HEK293 (cell line): ENCODE measurements at regions of chr17 and their contacts with region 1.

Region 1: DNA sequence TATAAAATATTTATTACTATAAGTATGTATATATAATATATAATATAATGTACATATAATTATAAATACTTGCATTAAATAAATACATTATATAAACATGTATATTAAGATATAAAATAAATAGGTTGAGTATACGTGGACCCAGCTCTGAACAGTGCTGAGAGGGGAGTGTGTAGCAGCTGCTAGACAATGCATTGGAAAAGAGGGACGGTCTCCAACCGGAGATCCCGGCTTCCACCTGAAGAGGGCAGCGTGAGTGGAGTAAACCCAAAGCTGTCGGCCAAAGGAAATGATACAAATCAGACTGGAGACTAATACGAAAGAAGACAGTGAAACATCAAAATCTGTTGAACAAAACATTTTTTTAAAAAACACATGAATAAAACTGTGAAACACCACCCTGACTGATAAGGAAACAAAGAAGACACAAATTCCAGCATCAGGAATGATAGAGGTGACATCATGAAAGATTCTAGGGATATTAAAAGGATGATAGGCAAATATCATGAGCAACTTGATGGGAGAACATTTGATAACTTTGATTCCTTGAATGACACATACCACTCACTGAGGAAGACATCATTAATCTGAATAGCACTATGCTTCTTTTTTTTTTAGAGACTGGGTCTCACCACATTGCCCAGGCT is 125.4 kb upstream of the CHMP6 start:
- H3K4me3 ChIP-seq: no peak overlapping the region
- H3K27ac ChIP-seq: no peak overlapping the region
- H3K4me1 ChIP-seq: no peaks in the 10 kb centered on the region
- CTCF ChIP-seq: peak; percentile 56

Region 2: GRCh38 chr17:80826955-80827645 is 39.2 kb before region 1 on chr17:
- CTCF ChIA-PET with region 1: no interaction called
- POLR2A ChIA-PET with region 1: no interaction called
- H3K4me3 ChIP-seq: no peak overlapping the region
- H3K27ac ChIP-seq: no peak overlapping the region
- H3K4me1 ChIP-seq: peaks cover 10% of the 10 kb centered on the region
- CTCF ChIP-seq: no peak

Region 3: DNA sequence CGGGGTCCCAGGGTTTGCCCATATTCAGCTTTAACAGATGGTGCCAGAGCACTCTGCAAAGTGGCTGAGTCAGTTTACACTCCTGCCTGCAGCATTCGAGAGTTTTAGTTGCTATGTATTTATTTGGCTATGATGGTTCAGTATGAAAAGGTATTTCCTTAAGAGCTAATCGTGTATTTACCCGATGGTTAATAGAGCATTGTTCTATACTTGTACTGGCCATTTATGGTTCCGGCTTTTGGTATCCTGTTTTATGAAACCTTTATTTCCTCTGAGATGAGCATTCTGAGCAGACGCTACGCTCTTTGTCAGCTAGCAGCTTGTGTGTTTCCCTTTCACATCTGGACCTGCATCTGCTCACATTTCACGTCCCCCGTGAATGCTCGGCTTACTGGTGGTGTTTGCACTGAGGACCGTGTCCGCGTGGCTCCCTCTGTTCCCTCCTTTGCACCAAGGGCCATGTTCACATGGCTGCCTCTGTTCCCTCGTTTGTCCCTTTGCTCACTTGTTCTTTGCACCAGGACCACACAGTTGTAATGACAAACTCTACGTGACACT is 23.7 kb before region 1 on chr17:
- CTCF ChIA-PET with region 1: interaction called, 5 read pairs
- POLR2A ChIA-PET with region 1: interaction called, 10 read pairs
- H3K4me3 ChIP-seq: no peak overlapping the region
- H3K27ac ChIP-seq: no peak overlapping the region
- H3K4me1 ChIP-seq: no peaks in the 10 kb centered on the region
- CTCF ChIP-seq: no peak

Region 4: DNA sequence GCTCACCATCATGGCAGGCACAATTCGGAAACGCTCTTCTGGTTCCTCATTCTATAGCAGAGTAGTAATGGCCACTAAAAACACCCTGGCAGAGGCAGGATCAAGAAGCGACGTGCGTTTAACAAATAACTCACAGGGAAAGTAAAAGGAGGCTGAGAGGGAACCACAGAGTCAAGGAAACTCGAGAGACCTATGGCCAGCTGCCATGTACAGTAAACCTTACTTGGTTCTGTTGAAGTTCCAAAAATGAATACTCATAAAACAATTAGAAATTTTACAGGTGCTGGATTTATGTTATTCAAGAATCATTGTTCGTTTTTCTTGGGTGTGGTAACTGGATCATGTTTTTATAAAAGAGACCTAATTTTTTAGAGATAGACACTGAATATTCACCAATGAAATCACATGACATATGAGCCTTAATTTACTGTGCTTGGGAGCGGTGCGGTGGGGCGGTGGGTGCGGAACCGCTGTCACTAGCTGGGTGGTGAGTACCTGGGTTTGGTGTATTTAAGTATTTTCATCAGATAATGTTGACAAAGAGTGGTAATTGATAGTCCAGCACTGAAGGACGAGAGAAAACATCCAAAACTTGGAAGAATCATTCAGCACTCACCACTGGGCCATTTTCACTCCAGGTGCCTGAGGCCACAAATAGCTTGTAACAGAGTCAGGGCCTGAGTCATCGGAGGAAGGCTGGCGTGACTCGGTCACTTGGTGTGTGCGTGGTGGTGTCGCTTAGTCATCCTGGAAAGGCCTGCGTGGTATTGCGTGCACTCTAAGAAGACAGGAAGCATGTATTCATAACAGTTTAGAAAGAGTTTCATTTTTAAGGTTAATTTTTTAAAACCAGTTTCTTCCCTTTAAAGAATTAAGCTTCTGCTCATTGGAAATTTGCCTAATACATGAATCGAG is 10.1 kb before region 1 on chr17:
- CTCF ChIA-PET with region 1: interaction called, 11 read pairs
- POLR2A ChIA-PET with region 1: no interaction called
- H3K4me3 ChIP-seq: no peak overlapping the region
- H3K27ac ChIP-seq: 0 out of 2 replicates have a peak overlapping the region, but pooled peaks have one; percentile 10
- H3K4me1 ChIP-seq: peaks cover 3% of the 10 kb centered on the region; the same call in 1 of the 2 replicates
- CTCF ChIP-seq: no peak

Region 5: DNA sequence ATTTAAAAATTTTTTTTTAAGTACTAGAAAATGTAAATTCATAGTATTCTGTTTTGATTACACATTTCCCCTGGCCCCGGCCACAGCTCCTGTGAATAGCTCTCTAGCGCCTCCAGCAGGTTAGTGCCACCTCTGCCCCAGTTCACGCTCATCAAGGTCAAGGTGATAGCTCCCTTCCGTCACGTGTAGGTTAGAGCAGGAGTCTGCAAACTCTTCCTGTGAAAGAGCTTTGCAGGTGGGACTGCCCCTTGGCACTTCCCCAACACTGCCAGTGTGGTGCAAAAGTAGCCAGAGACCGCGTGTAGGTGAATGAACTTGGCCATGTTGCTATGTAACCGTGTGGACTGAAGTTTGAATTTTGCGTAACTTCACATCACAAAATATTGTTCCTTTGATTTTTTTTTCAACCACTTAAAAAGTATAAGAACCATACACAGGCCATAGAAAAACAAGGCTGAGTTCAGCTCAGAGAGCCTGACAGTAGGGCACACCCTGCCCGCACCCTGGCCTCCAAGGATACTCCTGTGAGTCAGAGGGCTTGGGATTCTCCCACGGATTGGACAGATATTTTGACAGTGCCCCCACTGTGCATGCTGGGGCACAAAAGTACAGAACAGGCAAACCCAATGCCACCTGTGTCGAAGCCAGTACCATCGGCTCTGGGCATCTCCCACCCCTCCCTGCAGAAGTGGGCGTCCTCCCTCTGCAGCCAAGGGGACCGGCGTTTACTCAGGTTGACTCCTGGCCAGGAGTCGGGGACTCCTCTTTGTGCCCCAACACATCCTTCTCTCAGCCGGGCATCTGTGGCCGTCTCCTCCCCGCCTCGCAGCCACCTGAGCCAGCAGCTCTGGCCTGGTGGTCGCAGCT is 33.4 kb after region 1 on chr17:
- CTCF ChIA-PET with region 1: interaction called, 15 read pairs
- POLR2A ChIA-PET with region 1: no interaction called
- H3K4me3 ChIP-seq: no peak overlapping the region
- H3K27ac ChIP-seq: no peak overlapping the region
- H3K4me1 ChIP-seq: no peaks in the 10 kb centered on the region
- CTCF ChIP-seq: peak; percentile 25; the same call in 1 of the 2 replicates

Region 6: DNA sequence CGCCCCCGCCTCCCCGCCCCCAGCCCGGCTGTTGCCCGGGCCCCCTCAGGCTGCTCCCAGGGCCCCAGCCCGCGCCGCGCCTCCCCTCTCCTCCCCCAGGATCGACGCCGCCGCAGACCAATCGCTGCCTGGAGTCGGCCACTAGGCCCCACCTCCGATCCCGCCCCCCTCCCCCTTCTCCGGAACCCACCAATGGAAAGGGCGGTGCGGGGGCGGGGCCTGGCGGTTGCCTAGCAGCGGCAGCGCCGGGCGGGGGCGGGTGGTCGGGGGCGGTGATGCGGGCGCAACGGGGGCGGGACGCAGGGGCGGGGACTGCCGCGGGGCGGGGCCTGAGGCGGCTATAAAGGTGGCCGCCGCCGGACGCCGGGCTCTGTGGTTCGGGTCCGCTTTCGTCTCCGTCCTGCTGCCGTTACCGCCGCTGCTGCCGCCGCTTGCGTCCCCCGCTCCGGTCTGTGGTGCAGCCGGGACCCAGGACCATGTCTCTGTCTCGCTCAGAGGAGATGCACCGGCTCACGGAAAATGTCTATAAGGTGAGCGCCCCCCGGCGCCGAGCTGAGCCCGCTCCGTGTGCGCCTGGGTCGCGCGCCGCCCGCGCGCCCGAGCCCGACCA is 168.6 kb after region 1 on chr17 and contains the start of gene BAIAP2:
- CTCF ChIA-PET with region 1: no interaction called
- POLR2A ChIA-PET with region 1: no interaction called
- H3K4me3 ChIP-seq: peak within 1 kb of the TSS; percentile 75
- H3K27ac ChIP-seq: peak within 1 kb of the TSS; percentile 58; the same call in 1 of the 2 replicates
- H3K4me1 ChIP-seq: peaks cover 4% of the 10 kb centered on the region; the same call in 1 of the 2 replicates
- CTCF ChIP-seq: peak; percentile 47; the same call in 1 of the 2 replicates